T-cell (primary cell): ENCODE measurements at regions of chr1 and their contacts with region 1.

Region 1: GRCh38 chr1:153510984-153511410 is 24.8 kb downstream of the S100A6 start:
- DNase-seq: peak; percentile 29 to 86 (median 69)
- ATAC-seq: peak; percentile 85 to 90 (median 88)
- H3K4me3 ChIP-seq: no peak overlapping the region
- H3K4me3 Mint-ChIP-seq: no peak overlapping the region
- H3K27ac ChIP-seq: no peak overlapping the region
- H3K27ac Mint-ChIP-seq: no peak overlapping the region
- H3K4me1 ChIP-seq: peaks cover 0 to 13% of the 10 kb centered on the region in 2 experiments
- H3K4me1 Mint-ChIP-seq: peaks cover 4 to 10% (median 8%) of the 10 kb centered on the region in 3 donors
- H3K27me3 ChIP-seq: no peaks in the 10 kb centered on the region
- H3K27me3 Mint-ChIP-seq: no peaks in the 10 kb centered on the region

Region 2: DNA sequence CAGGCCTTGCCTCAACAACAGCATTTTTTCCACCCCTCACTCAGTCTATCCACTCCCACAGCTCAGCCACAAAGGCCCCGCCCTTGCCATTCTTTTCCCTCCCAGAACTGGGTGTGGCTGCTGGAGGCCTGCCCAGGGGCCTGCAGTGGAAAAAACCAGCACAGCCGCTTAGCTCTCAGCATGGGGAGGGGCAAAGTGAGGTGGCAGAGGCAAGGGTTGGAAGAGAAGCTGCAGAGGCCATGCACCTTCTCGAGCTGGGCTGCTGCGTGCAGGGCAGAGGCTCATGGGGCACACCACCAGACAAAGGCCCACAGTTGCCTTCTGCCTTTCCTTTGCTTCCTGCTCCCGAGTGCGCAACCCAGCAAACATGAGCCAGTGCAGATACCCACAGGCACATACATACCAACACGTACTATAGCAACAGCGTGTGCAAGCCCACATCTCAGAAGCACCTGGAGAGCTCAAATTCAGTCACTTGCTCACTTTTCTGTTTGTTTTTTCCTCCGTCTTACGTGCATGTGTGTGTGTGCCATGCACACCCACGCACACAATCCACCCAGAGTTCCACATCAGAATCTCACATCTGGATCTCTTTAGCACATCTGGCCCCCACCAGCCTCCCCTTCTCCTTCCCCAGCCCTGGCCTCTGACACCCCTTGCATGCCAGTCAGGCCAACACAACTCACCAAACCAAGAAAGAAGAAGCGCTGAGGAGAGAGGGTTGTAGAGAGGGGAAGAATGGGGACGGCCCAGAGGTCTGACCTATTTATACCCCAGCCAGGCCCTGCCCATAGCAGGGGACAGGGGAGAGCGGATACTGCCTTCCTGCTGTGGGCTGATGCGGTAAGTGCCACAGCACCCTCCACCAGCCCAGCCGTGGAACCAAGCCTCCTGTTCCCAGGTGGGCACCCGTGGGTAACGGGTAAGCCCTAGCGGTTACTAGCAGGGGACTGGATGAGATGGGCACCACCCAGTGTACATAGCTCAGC is 34.4 kb after region 1 on chr1 and contains the start of gene S100A4:
- CTCF ChIA-PET with region 1: interaction called in 1 of 2 experiments, 12 read pairs
- POLR2A ChIA-PET with region 1: no interaction called
- DNase-seq: peak; percentile 58 to 89 (median 74)
- ATAC-seq: peak; percentile 78 to 85 (median 82)
- H3K4me3 ChIP-seq: peak within 1 kb of the TSS; percentile 49 to 76
- H3K4me3 Mint-ChIP-seq: peak within 1 kb of the TSS; percentile 91 to 95 (median 93)
- H3K27ac ChIP-seq: peak within 1 kb of the TSS; percentile 86
- H3K27ac Mint-ChIP-seq: peak within 1 kb of the TSS; percentile 100
- H3K4me1 ChIP-seq: peaks cover 56 to 72% of the 10 kb centered on the region in 2 experiments
- H3K4me1 Mint-ChIP-seq: peaks cover 66 to 83% (median 74%) of the 10 kb centered on the region in 3 donors
- H3K27me3 ChIP-seq: peaks cover 0 to 3% of the 10 kb centered on the region in 2 experiments
- H3K27me3 Mint-ChIP-seq: no peaks in the 10 kb centered on the region
- total RNA-seq, gene S100A4: 297 to 698 (median 384) TPM

Region 3: DNA sequence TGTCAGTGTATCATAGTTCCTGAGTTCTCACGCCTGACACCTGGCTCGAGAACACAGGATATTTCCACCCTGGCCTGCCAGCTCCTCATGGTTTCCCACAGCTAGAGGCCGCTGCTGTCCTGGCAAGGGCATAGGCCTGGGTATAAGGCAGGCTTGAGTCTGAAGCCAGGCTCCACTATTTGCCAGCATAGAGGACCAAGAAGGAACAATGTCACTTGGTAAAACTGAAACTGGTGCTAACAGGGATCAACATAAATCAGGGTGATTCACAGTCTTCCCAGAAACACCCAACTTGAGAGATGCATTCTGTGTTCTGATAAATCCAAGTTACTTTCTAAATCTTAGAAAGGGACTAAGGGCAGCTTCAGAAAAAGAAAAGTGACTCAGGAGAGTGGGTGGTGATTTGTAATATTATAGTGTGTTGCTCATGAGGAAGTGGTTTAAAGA is 61.6 kb after region 1 on chr1:
- CTCF ChIA-PET with region 1: interaction called, 12 to 36 read pairs
- POLR2A ChIA-PET with region 1: no interaction called
- DNase-seq: peak in 30 of 35 experiments; percentile 12 to 60 (median 34)
- ATAC-seq: peak; percentile 68 to 87 (median 76)
- H3K4me3 ChIP-seq: no peak overlapping the region
- H3K4me3 Mint-ChIP-seq: no peak overlapping the region
- H3K27ac ChIP-seq: no peak overlapping the region
- H3K27ac Mint-ChIP-seq: peak overlapping the region; percentile 34 to 43
- H3K4me1 ChIP-seq: peaks cover 0 to 13% of the 10 kb centered on the region in 2 experiments
- H3K4me1 Mint-ChIP-seq: peaks cover 12 to 24% (median 22%) of the 10 kb centered on the region in 3 donors
- H3K27me3 ChIP-seq: peaks cover 0 to 22% of the 10 kb centered on the region in 2 experiments
- H3K27me3 Mint-ChIP-seq: peaks cover 5 to 10% of the 10 kb centered on the region in 2 donors